BJ (cell line): ENCODE measurements at regions of chr3 and their contacts with region 1.

Region 1: GRCh38 chr3:105490045-105490444 is 123.3 kb downstream of the ALCAM start:
- DNase-seq: no peak
- H3K4me3 ChIP-seq: no peak overlapping the region
- H3K27me3 ChIP-seq: no peaks in the 10 kb centered on the region
- CTCF ChIP-seq: no peak

Region 2: GRCh38 chr3:105394177-105394576 is 95.9 kb before region 1 on chr3:
- CTCF ChIA-PET with region 1: no interaction called
- POLR2A ChIA-PET with region 1: no interaction called
- DNase-seq: no peak
- H3K4me3 ChIP-seq: no peak overlapping the region
- H3K27me3 ChIP-seq: no peaks in the 10 kb centered on the region
- CTCF ChIP-seq: no peak

Region 3: GRCh38 chr3:105422645-105423044 is 67.4 kb before region 1 on chr3:
- CTCF ChIA-PET with region 1: no interaction called
- POLR2A ChIA-PET with region 1: interaction called, 11 read pairs
- DNase-seq: no peak
- H3K4me3 ChIP-seq: no peak overlapping the region
- H3K27me3 ChIP-seq: no peaks in the 10 kb centered on the region
- CTCF ChIP-seq: no peak